BJ (cell line): ENCODE measurements at regions of chr18 and their contacts with region 1.

Region 1: GRCh38 chr18:36419905-36420531 is 122.5 kb downstream of the FHOD3 start:
- DNase-seq: no peak
- H3K4me3 ChIP-seq: no peak overlapping the region
- H3K27me3 ChIP-seq: no peaks in the 10 kb centered on the region
- CTCF ChIP-seq: no peak

Region 2: GRCh38 chr18:36308711-36309435 is 111.1 kb before region 1 on chr18:
- CTCF ChIA-PET with region 1: no interaction called
- POLR2A ChIA-PET with region 1: interaction called, 11 read pairs
- DNase-seq: no peak
- H3K4me3 ChIP-seq: no peak overlapping the region
- H3K27me3 ChIP-seq: no peaks in the 10 kb centered on the region
- CTCF ChIP-seq: no peak

Region 3: GRCh38 chr18:36389811-36390581 is 30.0 kb before region 1 on chr18:
- CTCF ChIA-PET with region 1: no interaction called
- POLR2A ChIA-PET with region 1: no interaction called
- DNase-seq: no peak
- H3K4me3 ChIP-seq: no peak overlapping the region
- H3K27me3 ChIP-seq: no peaks in the 10 kb centered on the region
- CTCF ChIP-seq: no peak

Region 4: GRCh38 chr18:36436387-36436786 is 16.4 kb after region 1 on chr18:
- CTCF ChIA-PET with region 1: interaction called, 11 read pairs
- POLR2A ChIA-PET with region 1: no interaction called
- DNase-seq: no peak
- H3K4me3 ChIP-seq: no peak overlapping the region
- H3K27me3 ChIP-seq: no peaks in the 10 kb centered on the region
- CTCF ChIP-seq: no peak

Region 5: GRCh38 chr18:36757081-36757480 is 337.1 kb after region 1 on chr18:
- CTCF ChIA-PET with region 1: no interaction called
- POLR2A ChIA-PET with region 1: no interaction called
- DNase-seq: no peak
- H3K4me3 ChIP-seq: no peak overlapping the region
- H3K27me3 ChIP-seq: no peaks in the 10 kb centered on the region
- CTCF ChIP-seq: peak; percentile 62